Activated CD8-positive, alpha-beta memory T cell treated with anti-CD3 and anti-CD28 coated beads, Interleukin-2, amount 10 ng/mL, durations not matched to agents 7 days and 5 days (primary cell): ENCODE measurements at regions of chr1 and their contacts with region 1.

Region 1: DNA sequence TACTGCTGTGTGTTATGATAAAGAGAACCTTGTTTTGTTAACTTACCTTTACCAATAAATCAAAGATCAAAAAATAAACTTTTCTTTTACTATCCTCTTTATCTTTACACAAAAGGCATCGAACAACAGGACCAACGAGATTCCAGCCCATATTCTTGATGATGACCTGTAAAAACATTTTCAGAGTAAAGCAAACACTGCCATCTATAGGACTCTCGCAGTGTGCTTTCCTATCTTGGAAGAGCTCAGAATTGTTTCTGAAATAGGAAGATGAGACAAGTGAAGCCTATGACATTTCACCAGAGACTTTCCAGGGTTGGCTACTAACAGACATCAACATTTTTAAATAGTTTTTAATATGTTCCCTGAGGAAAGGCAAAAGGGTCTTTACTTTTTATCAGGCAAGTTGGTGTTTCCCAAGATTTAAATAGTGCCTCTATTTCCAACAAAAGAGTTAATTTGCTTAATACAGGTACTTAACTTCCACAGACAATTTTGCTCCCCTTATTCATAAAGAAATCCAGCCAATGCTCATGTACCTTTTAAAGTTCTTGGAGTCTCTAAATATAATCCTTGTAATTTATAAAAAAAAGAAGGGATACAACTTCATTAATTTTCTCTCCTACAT is 7.3 kb downstream of the GLMN start:
- DNase-seq: no peak
- ATAC-seq: peak; percentile 53
- H3K4me3 Mint-ChIP-seq: no peak overlapping the region
- H3K27ac Mint-ChIP-seq: no peak overlapping the region
- H3K4me1 Mint-ChIP-seq: peaks cover 20% of the 10 kb centered on the region
- H3K27me3 Mint-ChIP-seq: no peaks in the 10 kb centered on the region

Region 2: GRCh38 chr1:91997607-91998195 is 293.8 kb before region 1 on chr1:
- CTCF ChIA-PET with region 1: interaction called, 12 read pairs
- DNase-seq: peak; percentile 49
- ATAC-seq: no peak
- H3K4me3 Mint-ChIP-seq: no peak overlapping the region
- H3K27ac Mint-ChIP-seq: no peak overlapping the region
- H3K4me1 Mint-ChIP-seq: no peaks in the 10 kb centered on the region
- H3K27me3 Mint-ChIP-seq: peaks cover 9% of the 10 kb centered on the region